CD4-positive, alpha-beta T cell (primary cell): ENCODE measurements at regions of chr7 and their contacts with region 1.

Region 1: GRCh38 chr7:140810830-140811556 is 113.7 kb downstream of the BRAF start:
- DNase-seq: peak; percentile 6 to 84 (median 44)
- ATAC-seq: peak; percentile 84
- H3K4me3 ChIP-seq: no peak overlapping the region
- H3K4me3 Mint-ChIP-seq: no peak overlapping the region
- H3K27ac ChIP-seq: no peak overlapping the region
- H3K27ac Mint-ChIP-seq: no peak overlapping the region
- H3K4me1 ChIP-seq: no peaks in the 10 kb centered on the region
- H3K4me1 Mint-ChIP-seq: peaks cover 13% of the 10 kb centered on the region
- H3K27me3 ChIP-seq: no peaks in the 10 kb centered on the region
- H3K27me3 Mint-ChIP-seq: no peaks in the 10 kb centered on the region
- CTCF ChIP-seq: peak; percentile 81

Region 2: DNA sequence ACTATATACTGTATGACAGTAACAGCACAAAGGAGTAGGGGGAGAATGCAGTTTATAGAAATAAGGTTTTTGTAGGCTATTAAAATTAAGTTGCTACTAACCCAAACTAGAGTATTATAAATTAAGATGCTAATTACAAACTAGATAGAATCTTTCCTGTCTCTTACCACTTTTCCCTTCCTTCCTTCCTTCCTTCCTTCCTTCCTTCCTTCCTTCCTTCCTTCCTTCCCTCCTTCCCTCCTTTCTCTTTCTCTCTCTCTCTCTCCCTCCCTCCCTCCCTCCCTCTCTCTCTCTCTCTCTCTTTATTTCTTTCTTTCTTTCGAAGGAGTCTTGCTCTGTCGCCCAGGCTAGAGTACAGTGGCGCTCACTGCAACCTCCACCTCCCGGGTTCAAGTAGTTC is 150.1 kb after region 1 on chr7:
- CTCF ChIA-PET with region 1: no interaction called
- POLR2A ChIA-PET with region 1: no interaction called
- intact Hi-C with region 1: loop called in 1 of 2 experiments (anchors 5 kb)
- DNase-seq: no peak
- ATAC-seq: no peak
- H3K4me3 ChIP-seq: no peak overlapping the region
- H3K4me3 Mint-ChIP-seq: no peak overlapping the region
- H3K27ac ChIP-seq: no peak overlapping the region
- H3K27ac Mint-ChIP-seq: no peak overlapping the region
- H3K4me1 ChIP-seq: no peaks in the 10 kb centered on the region
- H3K4me1 Mint-ChIP-seq: no peaks in the 10 kb centered on the region
- H3K27me3 ChIP-seq: no peaks in the 10 kb centered on the region
- H3K27me3 Mint-ChIP-seq: no peaks in the 10 kb centered on the region
- CTCF ChIP-seq: no peak